Gastrocnemius medialis (tissue), 4 donors: ENCODE measurements at regions of chr6 and their contacts with region 1.

Region 1: DNA sequence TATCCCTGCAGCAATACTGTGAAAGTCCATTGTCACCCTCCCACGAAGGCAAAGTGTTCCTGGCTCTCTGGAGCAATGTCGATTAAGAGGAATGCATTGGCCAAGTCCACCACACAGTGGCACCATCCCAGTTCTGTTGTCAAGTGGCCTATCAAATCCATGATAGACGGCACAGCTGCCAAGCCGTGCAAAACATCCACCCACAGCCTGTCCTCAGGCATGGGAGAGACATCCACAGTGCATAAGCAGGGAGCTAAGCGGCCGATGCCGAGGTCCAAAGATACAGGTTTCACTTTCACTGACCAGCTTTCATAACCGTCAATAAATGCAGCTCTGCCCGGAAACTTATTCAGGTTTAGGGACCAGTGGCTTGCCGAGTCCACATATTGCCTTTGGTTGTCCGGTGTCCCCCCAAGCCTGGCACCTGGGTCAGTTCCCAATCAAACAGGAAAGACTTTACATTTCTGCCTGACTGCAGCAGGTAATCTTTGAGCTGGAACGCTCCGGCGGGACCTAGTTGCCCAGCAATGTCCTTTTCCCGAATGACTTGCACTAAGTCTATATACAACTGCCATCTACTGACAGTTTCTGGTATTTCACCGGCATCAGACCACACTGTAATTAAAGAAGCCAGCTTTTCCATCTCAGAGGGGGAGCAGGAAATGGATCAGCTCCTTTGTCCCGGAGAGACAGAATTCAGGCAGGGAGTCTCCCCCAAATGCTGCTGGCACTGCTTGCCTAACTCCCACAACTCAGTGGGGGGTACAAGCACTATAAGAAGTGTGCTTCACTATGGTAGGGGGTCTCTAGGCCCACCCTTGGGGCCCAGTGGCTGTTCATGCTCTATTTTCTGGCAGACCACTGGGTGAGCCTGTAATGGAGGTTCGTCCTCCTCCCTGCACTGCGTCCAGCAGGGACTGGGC is 6.3 kb downstream of the ZKSCAN3 start:
- DNase-seq: peak; percentile 63 to 65
- ATAC-seq: peak; percentile 93 to 95
- H3K4me3 ChIP-seq: peak overlapping the region; percentile 60 to 75 (median 74)
- H3K27ac ChIP-seq: peak overlapping the region; percentile 76 to 83 (median 82)
- H3K4me1 ChIP-seq: peaks cover 27 to 44% of the 10 kb centered on the region in 2 donors
- H3K27me3 ChIP-seq: no peaks in the 10 kb centered on the region
- CTCF ChIP-seq: peak; percentile 79 to 91 (median 88)
- POLR2A ChIP-seq: no peak

Region 2: GRCh38 chr6:27293436-27294098 is 1062.4 kb before region 1 on chr6:
- in situ Hi-C with region 1: no loop called
- intact Hi-C with region 1: no loop called
- DNase-seq: no peak
- ATAC-seq: no peak
- H3K4me3 ChIP-seq: no peak overlapping the region
- H3K27ac ChIP-seq: no peak overlapping the region
- H3K4me1 ChIP-seq: no peaks in the 10 kb centered on the region
- H3K27me3 ChIP-seq: peaks cover 80 to 95% (median 88%) of the 10 kb centered on the region in 3 donors
- CTCF ChIP-seq: no peak
- POLR2A ChIP-seq: no peak

Region 3: GRCh38 chr6:28080631-28081485 is 275.1 kb before region 1 on chr6:
- in situ Hi-C with region 1: no loop called
- intact Hi-C with region 1: loop called (anchors 2 kb)
- DNase-seq: peak; percentile 90 to 93
- ATAC-seq: peak; percentile 100
- H3K4me3 ChIP-seq: peak overlapping the region; percentile 72 to 92 (median 85)
- H3K27ac ChIP-seq: peak overlapping the region; percentile 84 to 90 (median 87)
- H3K4me1 ChIP-seq: peaks cover 10 to 11% of the 10 kb centered on the region in 2 donors
- H3K27me3 ChIP-seq: no peaks in the 10 kb centered on the region
- CTCF ChIP-seq: no peak
- POLR2A ChIP-seq: no peak

Region 4: GRCh38 chr6:28225056-28225834 is 130.8 kb before region 1 on chr6 and contains the start of gene ZSCAN9:
- in situ Hi-C with region 1: no loop called
- intact Hi-C with region 1: loop called (anchors 1 kb)
- DNase-seq: peak; percentile 75 to 83
- ATAC-seq: peak; percentile 93 to 99
- H3K4me3 ChIP-seq: peak within 1 kb of the TSS; percentile 66 to 88 (median 86)
- H3K27ac ChIP-seq: peak within 1 kb of the TSS; percentile 63 to 80 (median 71)
- H3K4me1 ChIP-seq: peaks cover 13 to 16% of the 10 kb centered on the region in 2 donors
- H3K27me3 ChIP-seq: peaks cover 0 to 12% (median 6%) of the 10 kb centered on the region in 3 donors
- CTCF ChIP-seq: no peak
- POLR2A ChIP-seq: no peak
- total RNA-seq, gene ZSCAN9: 3.7 to 6.5 (median 4.3) TPM

Region 5: DNA sequence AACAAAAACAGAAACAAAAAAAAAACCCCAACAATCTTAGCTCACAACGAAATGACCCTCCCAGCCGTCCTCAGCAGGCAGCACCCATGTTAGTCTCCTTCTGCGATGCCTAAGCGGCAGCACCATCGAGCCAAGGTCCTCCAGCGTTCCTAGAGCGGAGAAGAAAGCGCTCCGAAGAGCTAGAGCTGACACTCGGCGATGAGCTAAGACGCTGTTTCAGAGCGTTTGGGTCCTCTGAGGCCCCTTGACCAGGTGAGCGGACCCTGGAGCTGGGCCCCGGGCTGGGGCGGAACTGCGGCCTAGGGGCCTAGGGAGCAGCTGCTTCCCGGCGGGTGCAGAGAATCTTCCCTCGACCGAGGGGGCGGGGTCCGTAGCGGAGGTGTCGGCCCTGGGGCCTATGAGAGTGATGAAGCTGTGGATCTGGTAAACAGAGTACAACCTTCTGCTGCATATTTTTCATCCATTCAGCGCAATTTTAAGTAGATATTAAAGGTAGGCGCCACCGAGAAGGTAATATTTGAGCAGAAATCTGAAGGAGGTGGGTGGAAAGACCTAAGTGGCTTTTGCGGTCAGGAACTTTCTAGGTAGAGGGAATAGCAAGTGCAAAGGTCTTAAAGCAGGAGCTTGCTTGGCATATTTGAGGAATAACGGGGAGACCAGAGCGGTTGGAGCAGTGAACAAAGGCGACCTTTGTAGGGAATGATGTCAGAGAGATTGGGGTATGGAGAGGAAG is 88.9 kb before region 1 on chr6 and contains the start of gene ZSCAN26:
- in situ Hi-C with region 1: loop called in 3 of 4 experiments (anchors 10 kb)
- intact Hi-C with region 1: loop called (anchors 2 kb)
- DNase-seq: peak; percentile 64 to 71
- ATAC-seq: peak; percentile 97 to 99
- H3K4me3 ChIP-seq: peak within 1 kb of the TSS; percentile 70 to 98 (median 92)
- H3K27ac ChIP-seq: peak within 1 kb of the TSS; percentile 76 to 81 (median 80)
- H3K4me1 ChIP-seq: peaks cover 15 to 27% of the 10 kb centered on the region in 2 donors
- H3K27me3 ChIP-seq: no peaks in the 10 kb centered on the region
- CTCF ChIP-seq: no peak
- POLR2A ChIP-seq: peak in 1 of 2 donors; percentile 22
- total RNA-seq, gene ZSCAN26: 7.3 to 13.4 (median 9.8) TPM